ENCODE measurements at regions of chr9 and their contacts with region 1.

Region 1: DNA sequence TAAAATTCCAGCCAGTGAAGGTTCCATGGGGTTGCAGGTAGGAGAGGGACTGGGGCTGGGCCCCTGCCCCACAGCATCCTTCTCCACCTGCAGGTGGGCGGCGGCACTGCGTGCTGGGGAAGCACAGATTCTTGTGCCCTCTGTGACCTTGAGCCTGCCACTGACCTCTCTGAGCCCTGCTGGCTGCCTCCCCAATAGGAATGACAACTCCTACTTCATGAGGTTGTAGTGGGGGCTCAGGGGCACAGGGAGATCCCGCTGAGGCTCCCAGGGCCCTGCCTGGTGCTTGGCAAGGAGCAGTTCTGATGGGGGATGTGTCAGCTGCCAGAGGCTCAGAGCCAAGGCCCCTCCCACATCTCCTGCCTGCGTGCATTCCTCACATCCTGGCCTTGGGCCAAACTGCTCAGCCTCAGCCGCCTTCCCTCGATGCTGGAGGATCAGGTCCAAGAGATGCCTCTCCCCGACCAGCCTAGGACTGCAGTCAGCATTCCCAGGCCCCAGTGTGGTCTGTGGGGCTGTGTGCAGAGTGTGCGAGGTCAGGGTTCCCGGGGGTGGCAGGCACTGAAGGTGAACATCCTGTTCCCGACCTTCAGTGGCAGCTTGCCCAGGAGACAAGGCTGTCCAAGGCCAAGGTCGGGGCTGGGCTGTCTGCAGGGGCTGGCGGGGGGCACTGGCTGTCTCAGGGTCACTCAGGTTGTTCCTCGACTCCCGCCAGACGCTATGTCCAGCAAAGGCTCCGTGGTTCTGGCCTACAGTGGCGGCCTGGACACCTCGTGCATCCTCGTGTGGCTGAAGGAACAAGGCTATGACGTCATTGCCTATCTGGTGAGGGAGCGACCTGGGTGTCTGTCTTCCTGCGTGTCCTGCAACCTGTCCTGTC is 7.0 kb downstream of the ASS1 start:
- DNase-seq: peak; percentile 96
- H3K4me3 Mint-ChIP-seq: no peak overlapping the region
- H3K27ac Mint-ChIP-seq: peak overlapping the region; percentile 57
- H3K4me1 Mint-ChIP-seq: peaks cover 22% of the 10 kb centered on the region
- H3K27me3 Mint-ChIP-seq: no peaks in the 10 kb centered on the region
- CTCF ChIP-seq: peak; percentile 83

Region 2: DNA sequence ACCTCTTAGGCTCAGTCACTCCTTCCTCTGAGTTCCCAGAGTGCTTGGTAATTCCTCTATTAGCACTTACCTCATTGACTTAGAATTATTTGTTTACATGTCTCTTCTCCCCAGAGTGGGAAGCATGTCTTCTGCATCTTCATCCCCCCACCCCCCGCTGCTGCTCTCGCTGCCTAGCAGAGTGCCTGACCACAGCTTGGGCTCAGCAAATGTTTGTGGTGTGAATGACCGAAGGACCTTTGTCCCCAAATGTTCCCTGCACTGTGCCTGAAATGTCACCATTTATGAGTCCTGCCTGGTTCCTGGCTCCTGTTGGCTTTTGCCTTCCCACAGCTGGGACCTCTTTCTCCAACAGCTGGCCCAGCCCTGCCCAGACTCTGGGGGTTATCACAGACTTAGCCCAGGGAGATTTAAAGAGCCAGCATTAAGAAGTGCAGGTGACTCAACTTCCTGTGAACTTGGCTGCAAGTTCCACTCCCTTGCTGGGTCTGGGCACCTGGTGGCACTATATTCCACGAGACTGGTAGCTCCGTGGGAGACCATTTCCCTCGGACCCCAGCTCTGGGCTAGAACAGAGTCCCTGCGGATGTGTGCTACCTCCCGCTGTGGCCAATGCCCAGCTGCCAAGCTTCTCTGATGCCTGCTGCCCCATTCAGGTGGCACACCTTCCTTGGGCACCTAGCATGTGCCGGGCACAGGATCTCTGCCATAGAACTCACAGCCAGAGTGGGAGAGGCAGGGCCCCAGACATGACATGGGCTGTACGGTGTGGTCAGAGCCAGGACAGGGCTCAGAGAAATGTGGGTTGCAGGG is 187.9 kb before region 1 on chr9:
- CTCF ChIA-PET with region 1: interaction called, 4 read pairs
- POLR2A ChIA-PET with region 1: no interaction called
- intact Hi-C with region 1: loop called (anchors 1 kb)
- DNase-seq: peak; percentile 36
- H3K4me3 Mint-ChIP-seq: no peak overlapping the region
- H3K27ac Mint-ChIP-seq: no peak overlapping the region
- H3K4me1 Mint-ChIP-seq: no peaks in the 10 kb centered on the region
- H3K27me3 Mint-ChIP-seq: peaks cover 95% of the 10 kb centered on the region
- CTCF ChIP-seq: peak; percentile 6

Measured in MCF 10A (cell line).